ENCODE measurements at regions of chr10 and their contacts with region 1.

Region 1: GRCh38 chr10:73413528-73414229 is at the start of gene ANXA7:
- DNase-seq: peak; percentile 96
- H3K4me3 Mint-ChIP-seq: peak within 1 kb of the TSS; percentile 87
- H3K27ac Mint-ChIP-seq: peak within 1 kb of the TSS; percentile 87
- H3K4me1 Mint-ChIP-seq: peaks cover 50% of the 10 kb centered on the region
- H3K27me3 Mint-ChIP-seq: peaks cover 3% of the 10 kb centered on the region
- total RNA-seq, gene ANXA7: 138 to 143 TPM

Region 2: DNA sequence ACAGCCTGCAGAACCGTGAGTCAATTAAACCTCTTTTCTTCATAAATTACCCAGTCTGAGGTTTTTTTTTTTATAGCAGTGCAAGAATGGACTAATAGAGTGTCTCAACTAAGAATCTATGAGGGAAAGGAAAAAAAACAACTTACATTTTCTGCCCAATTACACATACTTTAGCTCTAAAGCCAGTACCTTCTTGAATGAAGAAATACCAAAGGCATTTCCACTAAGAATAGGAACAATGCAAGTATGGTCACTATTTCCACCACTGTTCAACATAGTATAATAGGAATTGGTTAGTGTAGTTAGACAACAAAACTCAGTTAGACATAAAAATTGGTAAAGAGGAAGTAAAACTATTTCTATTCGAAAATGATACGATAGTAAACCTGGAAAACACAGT is 825.4 kb before region 1 on chr10:
- CTCF ChIA-PET with region 1: no interaction called
- POLR2A ChIA-PET with region 1: no interaction called
- intact Hi-C with region 1: no loop called
- DNase-seq: no peak
- H3K4me3 Mint-ChIP-seq: no peak overlapping the region
- H3K27ac Mint-ChIP-seq: no peak overlapping the region
- H3K4me1 Mint-ChIP-seq: peaks cover 17% of the 10 kb centered on the region
- H3K27me3 Mint-ChIP-seq: no peaks in the 10 kb centered on the region

Region 3: DNA sequence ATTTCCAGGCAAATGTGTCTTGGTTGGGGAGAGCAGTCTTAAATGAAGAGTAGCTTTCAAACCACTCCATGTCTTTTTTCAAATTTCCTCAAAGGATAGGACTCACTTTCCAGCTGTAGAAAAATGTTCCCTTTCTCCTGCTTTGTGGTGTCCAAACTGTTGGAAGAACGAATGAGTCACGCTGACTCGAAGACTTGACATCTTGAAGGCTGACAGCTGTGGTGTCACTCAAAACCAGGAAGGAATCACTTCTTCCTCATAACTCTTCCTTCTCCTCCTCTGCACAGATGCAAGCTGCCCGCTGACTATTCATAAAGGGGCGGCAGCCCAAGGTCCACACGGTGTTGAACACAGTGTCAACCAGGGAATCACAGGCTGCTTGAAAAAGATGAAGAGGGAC is 478.3 kb before region 1 on chr10:
- CTCF ChIA-PET with region 1: no interaction called
- POLR2A ChIA-PET with region 1: no interaction called
- intact Hi-C with region 1: no loop called
- DNase-seq: no peak
- H3K4me3 Mint-ChIP-seq: no peak overlapping the region
- H3K27ac Mint-ChIP-seq: no peak overlapping the region
- H3K4me1 Mint-ChIP-seq: no peaks in the 10 kb centered on the region
- H3K27me3 Mint-ChIP-seq: no peaks in the 10 kb centered on the region

Region 4: GRCh38 chr10:73110345-73110849 is 303.3 kb before region 1 on chr10 and contains the start of gene NUDT13:
- CTCF ChIA-PET with region 1: no interaction called
- POLR2A ChIA-PET with region 1: no interaction called
- intact Hi-C with region 1: loop called (anchors 5 kb)
- DNase-seq: peak; percentile 61
- H3K4me3 Mint-ChIP-seq: peak within 1 kb of the TSS; percentile 85
- H3K27ac Mint-ChIP-seq: peak within 1 kb of the TSS; percentile 78
- H3K4me1 Mint-ChIP-seq: peaks cover 10% of the 10 kb centered on the region
- H3K27me3 Mint-ChIP-seq: no peaks in the 10 kb centered on the region
- total RNA-seq, gene NUDT13: 1.0 to 1.4 TPM

Region 5: DNA sequence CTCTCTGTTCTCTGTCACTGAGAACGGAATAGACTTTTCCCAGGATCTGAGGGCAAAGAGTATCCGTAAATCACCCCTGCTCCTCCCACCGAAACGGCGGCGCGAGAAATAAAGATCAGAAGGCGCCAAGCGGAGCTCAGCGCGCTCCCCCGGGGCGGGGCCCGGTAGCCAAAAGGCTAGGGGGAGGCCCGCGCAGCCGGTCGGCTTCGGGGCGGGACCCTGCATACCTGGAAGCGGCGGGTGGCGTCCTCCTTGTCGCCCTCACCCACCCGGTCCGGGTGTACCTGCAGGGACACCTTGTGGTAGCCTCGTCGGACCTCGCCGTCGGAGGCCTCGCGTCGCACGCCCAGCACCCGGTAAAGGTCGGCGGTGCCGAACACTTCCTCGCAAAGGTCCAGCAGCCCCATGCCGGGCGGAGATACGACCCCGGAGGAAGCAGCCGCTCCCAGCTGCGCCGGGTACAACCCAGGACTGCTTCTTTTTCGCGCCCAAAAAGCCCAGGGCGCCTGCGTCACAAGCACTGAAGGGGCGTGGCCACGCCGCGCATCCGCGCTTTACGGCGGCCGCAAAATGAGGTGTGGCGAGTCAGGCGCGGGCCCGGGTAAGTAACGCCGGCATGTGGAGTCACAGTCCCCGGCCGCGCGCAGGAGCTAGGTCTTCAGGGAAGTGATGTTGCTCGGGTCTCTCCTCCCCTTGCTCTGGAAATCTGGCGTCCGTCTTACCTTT is 166.7 kb before region 1 on chr10 and contains the start of gene DNAJC9:
- CTCF ChIA-PET with region 1: interaction called, 3 read pairs
- POLR2A ChIA-PET with region 1: interaction called, 11 read pairs
- intact Hi-C with region 1: loop called (anchors 2 kb)
- DNase-seq: peak; percentile 99
- H3K4me3 Mint-ChIP-seq: peak within 1 kb of the TSS; percentile 99
- H3K27ac Mint-ChIP-seq: peak within 1 kb of the TSS; percentile 94
- H3K4me1 Mint-ChIP-seq: peaks cover 61% of the 10 kb centered on the region
- H3K27me3 Mint-ChIP-seq: no peaks in the 10 kb centered on the region
- total RNA-seq, gene DNAJC9: 45.8 to 49.3 TPM

Region 6: DNA sequence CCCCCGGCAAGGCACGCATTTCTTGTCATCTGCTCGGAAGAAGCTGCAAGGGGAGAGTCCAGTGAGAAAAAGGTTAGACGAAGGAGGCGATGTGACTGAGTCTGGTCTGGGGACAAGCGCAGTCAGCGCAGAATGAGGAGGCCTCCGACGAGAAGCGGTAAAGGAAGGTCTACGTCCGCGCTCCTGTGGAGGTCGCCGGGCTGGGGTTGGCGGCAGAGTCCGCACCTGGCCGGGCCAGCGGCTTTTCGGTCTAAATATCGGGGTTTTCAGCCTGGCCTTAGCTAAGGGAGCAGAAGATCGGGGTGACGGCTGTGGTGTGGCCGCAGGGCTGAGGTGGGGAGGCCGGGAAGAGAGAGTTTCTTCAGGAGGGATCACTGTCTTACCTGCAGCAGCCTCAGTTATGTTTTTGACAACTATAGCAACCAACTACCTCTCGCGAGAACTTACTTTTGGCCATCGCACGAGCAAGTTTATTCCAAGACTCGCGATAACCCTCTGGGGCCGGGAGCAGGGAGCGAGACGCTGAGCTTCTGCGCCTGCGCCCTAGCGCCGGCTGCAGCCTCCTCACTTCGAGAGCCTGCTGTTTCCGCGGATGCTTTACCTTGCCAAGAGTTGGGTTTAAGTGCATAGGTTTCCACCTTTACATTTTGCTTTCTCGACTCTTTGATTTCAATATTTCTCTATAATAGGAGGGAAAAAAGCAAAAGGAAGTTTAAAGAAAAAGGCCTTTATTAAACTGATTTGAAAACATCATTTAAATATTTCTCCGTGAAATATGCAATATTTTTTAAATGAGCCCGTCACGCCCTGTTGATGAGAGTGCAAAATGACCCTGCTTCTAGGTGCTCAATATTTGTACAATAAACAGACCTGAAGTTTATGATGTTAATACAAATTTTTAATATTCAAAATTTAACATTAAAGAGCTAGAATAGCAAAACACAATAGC is 55.1 kb before region 1 on chr10 and contains the start of gene CFAP70:
- CTCF ChIA-PET with region 1: interaction called, 3 read pairs
- POLR2A ChIA-PET with region 1: interaction called, 9 read pairs
- intact Hi-C with region 1: loop called (anchors 2 kb)
- DNase-seq: peak; percentile 96
- H3K4me3 Mint-ChIP-seq: peak within 1 kb of the TSS; percentile 95
- H3K27ac Mint-ChIP-seq: peak within 1 kb of the TSS; percentile 79
- H3K4me1 Mint-ChIP-seq: peaks cover 14% of the 10 kb centered on the region
- H3K27me3 Mint-ChIP-seq: no peaks in the 10 kb centered on the region
- total RNA-seq, gene CFAP70: 0.33 to 0.80 TPM

Region 7: GRCh38 chr10:73480158-73480557 is 66.5 kb after region 1 on chr10:
- CTCF ChIA-PET with region 1: no interaction called
- POLR2A ChIA-PET with region 1: no interaction called
- intact Hi-C with region 1: loop called (anchors 5 kb)
- DNase-seq: no peak
- H3K4me3 Mint-ChIP-seq: peak overlapping the region; percentile 20
- H3K27ac Mint-ChIP-seq: no peak overlapping the region
- H3K4me1 Mint-ChIP-seq: peaks cover 31% of the 10 kb centered on the region
- H3K27me3 Mint-ChIP-seq: no peaks in the 10 kb centered on the region

Region 8: DNA sequence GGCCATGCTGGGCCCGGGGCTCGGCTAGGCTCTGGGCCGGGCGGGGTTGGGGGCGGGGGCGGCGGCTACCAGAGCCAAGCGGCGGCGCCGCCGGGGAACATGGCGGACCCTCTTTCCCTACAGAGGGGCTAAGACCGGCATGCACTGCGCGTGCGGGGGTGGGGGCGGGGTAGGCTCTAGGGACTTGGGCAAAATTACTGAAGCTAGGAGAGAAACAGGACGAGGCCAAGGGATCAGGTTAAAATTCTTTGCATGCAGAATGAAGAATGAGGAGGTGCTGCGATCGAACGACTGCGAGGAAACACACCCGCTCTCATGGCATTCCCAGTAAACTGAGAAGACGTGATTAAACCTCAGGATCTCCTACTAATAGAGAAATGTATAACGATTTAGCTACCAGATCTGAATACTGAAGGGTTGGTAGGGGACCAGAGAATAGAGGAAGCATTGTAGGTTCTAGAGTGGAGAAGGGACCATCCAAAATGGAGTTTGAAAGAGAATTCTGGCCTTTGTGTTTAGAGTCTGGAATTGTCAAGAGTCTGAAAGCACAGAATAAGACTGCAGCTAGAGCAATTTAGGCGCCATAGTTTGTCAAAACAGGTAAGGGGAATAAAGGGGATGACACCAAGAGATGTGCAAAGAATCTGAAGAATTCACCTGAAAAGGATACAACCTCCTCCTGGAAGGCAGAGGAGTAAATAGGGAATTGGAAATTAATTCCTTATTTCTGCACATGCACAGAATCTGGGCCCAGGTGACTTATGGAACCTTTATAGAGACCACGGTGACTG is 82.4 kb after region 1 on chr10 and contains the start of gene PPP3CB:
- CTCF ChIA-PET with region 1: no interaction called
- POLR2A ChIA-PET with region 1: interaction called, 15 read pairs
- intact Hi-C with region 1: loop called (anchors 1 kb)
- DNase-seq: peak; percentile 96
- H3K4me3 Mint-ChIP-seq: peak within 1 kb of the TSS; percentile 86
- H3K27ac Mint-ChIP-seq: peak within 1 kb of the TSS; percentile 91
- H3K4me1 Mint-ChIP-seq: peaks cover 42% of the 10 kb centered on the region
- H3K27me3 Mint-ChIP-seq: no peaks in the 10 kb centered on the region
- total RNA-seq, gene PPP3CB: 48.4 to 50.2 TPM

Region 9: GRCh38 chr10:73625884-73626752 is 212.4 kb after region 1 on chr10:
- CTCF ChIA-PET with region 1: no interaction called
- POLR2A ChIA-PET with region 1: no interaction called
- intact Hi-C with region 1: loop called (anchors 5 kb)
- DNase-seq: peak; percentile 96
- H3K4me3 Mint-ChIP-seq: peak overlapping the region; percentile 94
- H3K27ac Mint-ChIP-seq: peak overlapping the region; percentile 93
- H3K4me1 Mint-ChIP-seq: peaks cover 17% of the 10 kb centered on the region
- H3K27me3 Mint-ChIP-seq: no peaks in the 10 kb centered on the region

Measured in activated CD4-positive, alpha-beta memory T cell treated with anti-CD3 and anti-CD28 coated beads for 36 hours (primary cell).